B cell (primary cell): ENCODE measurements at regions of chr1 and their contacts with region 1.

Region 1: DNA sequence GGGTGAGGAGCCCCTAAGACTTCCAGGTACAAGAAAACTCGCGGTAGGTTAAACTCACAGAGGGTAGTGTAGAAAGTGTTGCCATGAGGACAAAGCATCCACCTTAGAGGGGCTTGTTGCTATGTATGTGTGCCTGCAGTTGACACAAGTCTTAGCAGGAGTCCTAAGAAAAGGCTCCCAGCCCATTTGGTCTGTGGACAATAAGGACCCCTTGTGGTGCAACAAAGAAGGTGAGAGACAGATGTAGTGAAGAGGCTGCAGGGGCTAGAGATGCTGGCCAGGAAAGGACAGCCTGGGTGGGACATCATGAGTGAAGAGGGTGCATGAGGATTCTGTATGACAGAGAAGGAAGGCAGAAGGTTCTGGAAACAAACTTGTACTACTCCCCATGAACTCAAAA is 36.3 kb upstream of the IL10 start:
- DNase-seq: peak; percentile 62
- ATAC-seq: peak; percentile 81
- H3K4me3 ChIP-seq: no peak overlapping the region
- H3K4me3 Mint-ChIP-seq: no peak overlapping the region
- H3K27ac ChIP-seq: no peak overlapping the region
- H3K27ac Mint-ChIP-seq: no peak overlapping the region
- H3K4me1 ChIP-seq: peaks cover 8 to 12% of the 10 kb centered on the region in 2 donors
- H3K4me1 Mint-ChIP-seq: peaks cover 27% of the 10 kb centered on the region
- H3K27me3 ChIP-seq: no peaks in the 10 kb centered on the region
- H3K27me3 Mint-ChIP-seq: no peaks in the 10 kb centered on the region
- CTCF ChIP-seq: peak; percentile 50

Region 2: GRCh38 chr1:206469933-206470691 is 338.5 kb before region 1 on chr1 and contains the start of gene IKBKE:
- CTCF ChIA-PET with region 1: no interaction called
- POLR2A ChIA-PET with region 1: no interaction called
- intact Hi-C with region 1: loop called (anchors 10 kb)
- DNase-seq: peak; percentile 77
- ATAC-seq: peak; percentile 65
- H3K4me3 ChIP-seq: peak within 1 kb of the TSS; percentile 62 to 97 (median 85)
- H3K4me3 Mint-ChIP-seq: peak within 1 kb of the TSS; percentile 88
- H3K27ac ChIP-seq: peak within 1 kb of the TSS; percentile 63 to 75
- H3K27ac Mint-ChIP-seq: peak within 1 kb of the TSS; percentile 85
- H3K4me1 ChIP-seq: peaks cover 63 to 74% of the 10 kb centered on the region in 2 donors
- H3K4me1 Mint-ChIP-seq: peaks cover 73% of the 10 kb centered on the region
- H3K27me3 ChIP-seq: no peaks in the 10 kb centered on the region
- H3K27me3 Mint-ChIP-seq: no peaks in the 10 kb centered on the region
- CTCF ChIP-seq: peak; percentile 30
- total RNA-seq, gene IKBKE: 40.5 and 40.8 TPM in 2 replicates

Region 3: GRCh38 chr1:206658264-206658980 is 150.2 kb before region 1 on chr1:
- CTCF ChIA-PET with region 1: interaction called, 21 read pairs
- POLR2A ChIA-PET with region 1: no interaction called
- intact Hi-C with region 1: no loop called
- DNase-seq: peak; percentile 72
- ATAC-seq: peak; percentile 85
- H3K4me3 ChIP-seq: peak overlapping the region in 3 of 5 experiments; percentile 8 to 51 (median 12)
- H3K4me3 Mint-ChIP-seq: peak overlapping the region; percentile 49
- H3K27ac ChIP-seq: no peak overlapping the region
- H3K27ac Mint-ChIP-seq: peak overlapping the region; percentile 1
- H3K4me1 ChIP-seq: peaks cover 16 to 17% of the 10 kb centered on the region in 2 donors
- H3K4me1 Mint-ChIP-seq: peaks cover 21% of the 10 kb centered on the region
- H3K27me3 ChIP-seq: peaks cover 0 to 34% (median 11%) of the 10 kb centered on the region in 4 experiments
- H3K27me3 Mint-ChIP-seq: peaks cover 30% of the 10 kb centered on the region
- CTCF ChIP-seq: peak; percentile 96

Region 4: DNA sequence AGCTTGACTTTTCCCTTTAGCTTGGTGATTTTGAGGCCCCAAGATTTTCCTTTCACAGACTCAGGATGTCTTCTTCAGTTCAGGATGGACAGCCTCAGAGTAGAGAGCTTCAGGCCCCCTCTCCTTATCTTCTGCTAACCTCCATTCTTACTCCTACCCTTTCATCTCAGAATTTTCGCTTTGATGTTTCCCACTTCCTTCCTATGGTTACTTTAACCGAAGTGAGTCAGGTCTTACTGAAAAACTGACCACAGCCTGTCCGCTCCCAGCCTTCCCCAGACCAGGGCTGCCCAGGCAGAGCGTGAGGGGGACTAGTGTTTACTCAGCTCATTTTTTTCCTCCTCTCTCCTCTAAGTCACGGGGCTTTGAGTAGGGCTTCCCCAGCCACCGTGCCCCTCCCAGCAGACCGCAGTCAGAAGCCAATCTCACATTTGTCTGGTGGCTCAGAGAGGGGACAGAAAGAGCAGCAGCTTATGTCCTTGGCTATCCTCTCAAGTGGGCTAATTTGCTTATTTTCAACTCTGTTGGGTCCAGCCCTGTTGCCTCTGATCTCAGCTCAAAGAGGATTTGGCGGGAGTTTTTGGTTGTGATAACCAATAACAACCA is 42.3 kb before region 1 on chr1:
- CTCF ChIA-PET with region 1: interaction called, 55 read pairs
- POLR2A ChIA-PET with region 1: interaction called, 4 read pairs
- intact Hi-C with region 1: loop called (anchors 5 kb)
- DNase-seq: peak; percentile 74
- ATAC-seq: peak; percentile 75
- H3K4me3 ChIP-seq: no peak overlapping the region
- H3K4me3 Mint-ChIP-seq: peak overlapping the region; percentile 69
- H3K27ac ChIP-seq: no peak overlapping the region
- H3K27ac Mint-ChIP-seq: peak overlapping the region; percentile 51
- H3K4me1 ChIP-seq: peaks cover 36 to 41% of the 10 kb centered on the region in 2 donors
- H3K4me1 Mint-ChIP-seq: peaks cover 51% of the 10 kb centered on the region
- H3K27me3 ChIP-seq: no peaks in the 10 kb centered on the region
- H3K27me3 Mint-ChIP-seq: no peaks in the 10 kb centered on the region
- CTCF ChIP-seq: no peak

Region 5: DNA sequence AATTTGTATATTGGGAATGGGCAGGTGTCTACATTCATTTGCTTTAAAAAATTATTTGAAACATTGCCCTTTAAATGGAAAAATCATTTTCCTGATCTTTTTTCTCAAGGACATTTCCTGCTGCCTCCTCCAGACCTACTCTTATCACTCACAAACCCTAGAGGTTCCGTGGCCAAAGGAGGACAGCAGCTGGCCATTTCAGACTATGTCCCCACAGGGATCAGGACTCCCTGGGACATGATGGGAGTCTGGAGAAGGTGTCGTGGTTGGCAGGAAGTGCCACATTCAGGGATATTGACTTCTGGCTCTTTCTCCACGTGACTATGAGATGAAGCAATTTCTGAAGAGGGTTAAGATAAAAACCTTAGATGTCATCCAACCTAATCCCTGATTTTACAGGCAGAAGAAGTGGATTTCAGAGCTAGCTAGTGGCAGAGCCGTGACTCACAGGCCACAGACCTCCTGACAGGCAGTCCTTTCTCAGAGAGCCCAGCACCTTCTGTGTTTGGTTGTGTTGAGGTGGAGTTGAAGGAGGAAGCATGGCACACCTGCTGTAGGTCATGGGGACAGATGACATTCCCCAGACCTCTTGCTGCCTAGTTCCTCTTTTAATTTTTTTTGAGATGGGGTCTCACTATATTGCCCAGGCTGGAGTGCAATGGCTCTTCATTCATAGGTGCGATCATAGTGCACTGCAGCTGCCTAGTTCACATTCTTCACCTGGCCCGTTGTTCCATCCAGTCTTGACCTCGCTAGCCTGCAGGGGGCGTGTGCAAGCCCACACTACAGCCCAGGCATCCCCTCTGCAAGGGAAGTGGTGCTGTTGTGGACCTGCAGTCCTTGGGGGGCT is 10.9 kb before region 1 on chr1:
- CTCF ChIA-PET with region 1: interaction called, 39 read pairs
- POLR2A ChIA-PET with region 1: interaction called, 4 read pairs
- intact Hi-C with region 1: no loop called
- DNase-seq: peak; percentile 68
- ATAC-seq: peak; percentile 34
- H3K4me3 ChIP-seq: no peak overlapping the region
- H3K4me3 Mint-ChIP-seq: no peak overlapping the region
- H3K27ac ChIP-seq: no peak overlapping the region
- H3K27ac Mint-ChIP-seq: no peak overlapping the region
- H3K4me1 ChIP-seq: peaks cover 23 to 39% of the 10 kb centered on the region in 2 donors
- H3K4me1 Mint-ChIP-seq: peaks cover 63% of the 10 kb centered on the region
- H3K27me3 ChIP-seq: no peaks in the 10 kb centered on the region
- H3K27me3 Mint-ChIP-seq: no peaks in the 10 kb centered on the region
- CTCF ChIP-seq: peak; percentile 66

Region 6: GRCh38 chr1:206865013-206865671 is 56.5 kb after region 1 on chr1 and contains the start of gene IL20:
- CTCF ChIA-PET with region 1: interaction called, 13 read pairs
- POLR2A ChIA-PET with region 1: no interaction called
- intact Hi-C with region 1: no loop called
- DNase-seq: peak; percentile 82
- ATAC-seq: peak; percentile 80
- H3K4me3 ChIP-seq: no peak within 1 kb of the TSS
- H3K4me3 Mint-ChIP-seq: no peak within 1 kb of the TSS
- H3K27ac ChIP-seq: no peak within 1 kb of the TSS
- H3K27ac Mint-ChIP-seq: peak within 1 kb of the TSS; percentile 43
- H3K4me1 ChIP-seq: no peaks in the 10 kb centered on the region
- H3K4me1 Mint-ChIP-seq: peaks cover 7% of the 10 kb centered on the region
- H3K27me3 ChIP-seq: peaks cover 0 to 4% (median 0%) of the 10 kb centered on the region in 4 experiments
- H3K27me3 Mint-ChIP-seq: peaks cover 16% of the 10 kb centered on the region
- CTCF ChIP-seq: peak; percentile 97
- total RNA-seq, gene IL20: not detected in 2 replicates

Region 7: GRCh38 chr1:206935491-206936067 is 127.0 kb after region 1 on chr1:
- CTCF ChIA-PET with region 1: interaction called, 78 read pairs
- POLR2A ChIA-PET with region 1: no interaction called
- intact Hi-C with region 1: loop called (anchors 2 kb)
- DNase-seq: peak; percentile 59
- ATAC-seq: peak; percentile 14
- H3K4me3 ChIP-seq: no peak overlapping the region
- H3K4me3 Mint-ChIP-seq: no peak overlapping the region
- H3K27ac ChIP-seq: no peak overlapping the region
- H3K27ac Mint-ChIP-seq: no peak overlapping the region
- H3K4me1 ChIP-seq: peaks cover 27 to 30% of the 10 kb centered on the region in 2 donors
- H3K4me1 Mint-ChIP-seq: peaks cover 30% of the 10 kb centered on the region
- H3K27me3 ChIP-seq: no peaks in the 10 kb centered on the region
- H3K27me3 Mint-ChIP-seq: no peaks in the 10 kb centered on the region
- CTCF ChIP-seq: peak; percentile 51

Region 8: GRCh38 chr1:207103892-207104373 is 295.3 kb after region 1 on chr1 and contains the start of gene C4BPA:
- CTCF ChIA-PET with region 1: no interaction called
- POLR2A ChIA-PET with region 1: no interaction called
- intact Hi-C with region 1: no loop called
- DNase-seq: no peak
- ATAC-seq: no peak
- H3K4me3 ChIP-seq: no peak within 1 kb of the TSS
- H3K4me3 Mint-ChIP-seq: no peak within 1 kb of the TSS
- H3K27ac ChIP-seq: no peak within 1 kb of the TSS
- H3K27ac Mint-ChIP-seq: no peak within 1 kb of the TSS
- H3K4me1 ChIP-seq: no peaks in the 10 kb centered on the region
- H3K4me1 Mint-ChIP-seq: no peaks in the 10 kb centered on the region
- H3K27me3 ChIP-seq: peaks cover 0 to 7% (median 1%) of the 10 kb centered on the region in 4 experiments
- H3K27me3 Mint-ChIP-seq: peaks cover 47% of the 10 kb centered on the region
- CTCF ChIP-seq: no peak
- total RNA-seq, gene C4BPA: not detected in 2 replicates